ENCODE measurements at regions of chr6 and their contacts with region 1.

Region 1: DNA sequence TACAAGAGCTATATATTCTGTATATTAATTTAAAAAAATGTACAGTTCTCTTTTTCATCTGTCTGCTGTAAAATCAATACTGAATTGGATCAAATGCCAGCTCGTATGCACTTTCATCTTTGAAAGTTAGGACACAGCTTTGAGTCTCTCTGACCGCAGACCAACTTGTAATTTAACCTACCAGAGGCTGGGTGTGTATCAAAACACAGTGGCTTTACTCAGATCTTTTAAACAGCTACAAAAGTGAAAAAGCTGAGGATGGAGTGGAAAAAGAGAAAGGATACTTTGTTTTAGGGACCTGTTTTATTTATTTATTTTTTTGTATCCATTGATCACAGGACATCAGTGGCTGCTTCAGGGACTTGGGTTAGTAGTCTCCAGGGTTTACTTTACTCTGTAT is 44.1 kb downstream of the KIAA0408 start:
- DNase-seq: no peak
- ATAC-seq: no peak
- H3K4me3 ChIP-seq: no peak overlapping the region
- H3K4me3 Mint-ChIP-seq: no peak overlapping the region
- H3K27ac ChIP-seq: no peak overlapping the region
- H3K27ac Mint-ChIP-seq: no peak overlapping the region
- H3K4me1 ChIP-seq: no peaks in the 10 kb centered on the region
- H3K4me1 Mint-ChIP-seq: no peaks in the 10 kb centered on the region
- H3K27me3 ChIP-seq: no peaks in the 10 kb centered on the region
- H3K27me3 Mint-ChIP-seq: no peaks in the 10 kb centered on the region
- CTCF ChIP-seq: no peak

Region 2: GRCh38 chr6:127376685-127377084 is 38.4 kb before region 1 on chr6:
- CTCF ChIA-PET with region 1: no interaction called
- POLR2A ChIA-PET with region 1: no interaction called
- intact Hi-C with region 1: loop called in 1 of 2 experiments (anchors 1 kb)
- DNase-seq: no peak
- ATAC-seq: no peak
- H3K4me3 ChIP-seq: no peak overlapping the region
- H3K4me3 Mint-ChIP-seq: no peak overlapping the region
- H3K27ac ChIP-seq: no peak overlapping the region
- H3K27ac Mint-ChIP-seq: no peak overlapping the region
- H3K4me1 ChIP-seq: no peaks in the 10 kb centered on the region
- H3K4me1 Mint-ChIP-seq: no peaks in the 10 kb centered on the region
- H3K27me3 ChIP-seq: no peaks in the 10 kb centered on the region
- H3K27me3 Mint-ChIP-seq: no peaks in the 10 kb centered on the region
- CTCF ChIP-seq: no peak

Measured in CD4-positive, alpha-beta T cell (primary cell).